Cardiac septum (tissue), 1 donor: ENCODE measurements at regions of chr7 and their contacts with region 1.

Region 1: DNA sequence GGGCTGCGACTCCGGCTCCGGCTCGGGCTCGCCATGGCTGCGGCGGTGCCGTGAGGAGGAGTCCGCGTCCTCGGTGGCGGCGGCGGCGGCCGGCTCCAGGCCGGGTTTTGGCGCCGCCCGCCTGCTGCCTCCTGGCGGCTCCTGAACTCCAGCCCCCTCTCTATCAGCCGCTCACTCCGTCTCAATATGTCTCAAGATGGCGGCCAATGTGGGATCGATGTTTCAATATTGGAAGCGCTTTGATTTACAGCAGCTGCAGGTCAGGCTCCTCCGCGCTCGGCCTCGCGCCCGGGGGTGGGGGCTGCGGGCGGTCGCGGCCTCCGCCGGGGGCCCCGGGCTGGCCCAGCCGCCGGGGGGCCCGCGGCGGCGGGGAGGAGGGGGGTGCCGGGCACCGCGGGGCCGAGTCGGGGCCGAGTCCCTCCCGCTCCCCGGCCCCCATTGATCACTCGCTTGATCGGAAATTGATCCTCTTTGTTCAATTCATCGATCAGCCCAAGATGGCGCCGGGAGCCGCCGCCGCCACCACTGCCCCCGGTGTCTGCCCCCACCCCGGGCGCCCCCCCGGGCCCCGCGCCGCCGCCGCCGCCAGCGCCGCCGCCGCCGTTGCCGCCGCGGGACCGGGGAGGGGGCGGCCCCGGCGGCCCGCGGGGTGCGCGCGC is 1.5 kb upstream of the CUX1 start:
- DNase-seq: peak; percentile 82

Region 2: DNA sequence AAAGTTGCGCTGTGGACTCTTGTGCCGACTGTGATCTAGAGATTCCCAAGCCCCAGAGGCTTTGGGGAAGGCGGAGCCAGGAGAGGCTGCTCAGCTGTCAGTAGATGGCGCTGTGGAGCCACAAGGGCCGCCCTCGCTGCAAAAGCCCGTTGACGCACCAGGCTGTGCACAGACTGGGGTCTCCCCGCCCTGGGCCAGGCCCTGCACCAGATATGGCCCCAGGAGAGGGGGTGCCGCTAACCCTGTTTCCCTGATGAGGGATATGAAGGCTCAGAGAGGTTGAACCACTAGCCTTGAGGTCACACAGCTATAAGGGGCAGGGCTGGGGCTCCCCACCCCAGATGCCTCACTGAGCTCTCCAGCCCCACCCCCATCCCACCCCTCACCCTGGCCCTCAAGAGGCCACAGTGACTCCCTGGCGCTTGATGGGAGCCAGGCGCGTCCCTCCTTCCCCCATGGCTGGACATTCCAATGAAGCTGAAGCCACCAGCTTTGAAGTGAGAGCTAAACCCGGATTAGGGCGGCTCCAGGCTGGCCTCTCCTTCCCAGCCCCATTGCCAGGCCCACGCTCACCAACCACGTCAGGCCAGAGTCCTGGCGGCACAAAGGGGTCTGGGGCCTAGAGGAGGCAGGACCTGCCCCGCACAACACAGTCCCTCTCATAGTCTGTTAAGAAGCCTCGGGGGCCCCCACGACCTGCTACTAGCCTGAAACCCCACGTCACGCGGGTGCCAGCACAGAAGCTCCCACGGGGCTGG is 213.3 kb before region 1 on chr7:
- intact Hi-C with region 1: loop called (anchors 1 kb)
- DNase-seq: peak; percentile 88

Region 3: DNA sequence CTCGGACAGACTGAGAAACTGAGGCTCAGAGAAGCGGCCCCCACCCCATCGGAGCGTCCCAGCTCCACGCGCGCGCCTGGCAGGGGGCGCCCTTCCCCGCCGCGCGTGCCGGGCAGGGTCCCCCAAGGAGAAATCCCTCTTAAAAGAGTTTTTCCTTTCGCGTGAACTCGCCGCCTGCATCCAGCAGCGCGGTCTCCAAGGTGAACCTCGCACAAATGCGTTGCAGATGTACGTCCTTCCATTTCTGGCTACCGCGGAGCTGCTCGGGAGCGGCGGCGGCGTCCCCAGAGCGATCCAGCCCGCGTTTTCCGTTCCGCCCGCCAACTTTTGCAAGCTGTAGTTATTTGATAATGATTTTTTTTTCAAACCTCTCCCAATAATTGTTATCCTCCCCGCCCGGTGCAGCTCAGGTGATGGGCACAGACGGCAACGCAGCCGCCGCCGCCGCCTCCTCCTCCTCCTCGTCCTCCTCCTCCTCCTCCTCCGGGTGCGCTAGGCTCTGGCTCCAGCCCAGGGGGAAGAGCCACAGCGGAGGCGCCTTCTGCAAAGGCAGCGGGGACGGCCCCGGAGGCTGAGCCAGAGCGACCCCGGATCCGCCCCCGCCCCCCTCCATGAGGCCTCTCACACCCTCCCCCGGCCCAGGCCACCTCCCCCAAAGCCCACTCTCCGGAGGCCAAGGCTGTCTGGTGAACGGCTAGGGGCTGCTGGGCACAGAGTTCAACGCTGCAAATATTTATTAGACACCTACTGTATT is 72.5 kb before region 1 on chr7:
- intact Hi-C with region 1: loop called (anchors 2 kb)
- DNase-seq: no peak

Region 4: DNA sequence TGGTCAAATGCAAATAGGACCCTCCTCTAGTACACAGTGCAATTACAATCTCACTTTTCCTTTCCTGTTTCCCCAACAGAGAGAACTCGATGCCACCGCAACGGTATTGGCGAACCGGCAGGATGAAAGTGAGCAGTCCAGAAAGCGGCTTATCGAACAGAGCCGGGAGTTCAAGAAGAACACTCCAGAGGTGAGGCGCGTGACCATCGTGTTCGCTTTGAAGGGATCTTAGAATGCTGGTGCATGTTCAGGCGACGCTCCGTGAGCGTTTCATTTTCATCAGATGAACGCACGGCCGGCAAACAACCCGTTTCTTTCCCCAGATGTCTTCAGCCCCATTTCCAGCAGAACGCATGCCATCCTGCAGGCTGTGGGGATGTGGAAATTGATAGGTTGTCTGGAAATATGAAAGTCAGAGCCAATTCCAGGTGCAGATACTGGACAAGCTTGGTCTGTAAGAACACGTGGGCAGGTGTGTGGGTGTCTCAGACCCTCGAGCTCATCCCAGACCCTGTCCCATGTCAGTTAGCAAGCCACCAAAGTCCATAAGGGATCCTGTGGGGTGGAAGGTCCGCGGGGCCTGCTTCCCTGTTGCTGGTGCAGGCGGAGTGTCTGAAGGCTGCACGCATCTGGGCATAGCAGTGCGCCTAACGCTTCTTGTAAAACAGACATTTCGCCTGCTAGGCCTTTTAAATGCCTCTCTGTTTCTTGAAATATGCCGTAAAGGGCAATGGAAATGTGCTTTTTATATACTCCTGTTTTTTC is 100.3 kb after region 1 on chr7:
- intact Hi-C with region 1: loop called (anchors 5 kb)
- DNase-seq: no peak

Region 5: GRCh38 chr7:102044984-102045673 is 229.2 kb after region 1 on chr7:
- intact Hi-C with region 1: loop called (anchors 5 kb)
- DNase-seq: no peak

Region 6: GRCh38 chr7:102236592-102237287 is 420.8 kb after region 1 on chr7:
- intact Hi-C with region 1: loop called (anchors 5 kb)
- DNase-seq: no peak